ENCODE measurements at regions of chr3 and their contacts with region 1.

Region 1: GRCh38 chr3:45210308-45211041 is 15.6 kb downstream of the TMEM158 start:
- DNase-seq: peak; percentile 86
- ATAC-seq: peak; percentile 97 to 98

Region 2: DNA sequence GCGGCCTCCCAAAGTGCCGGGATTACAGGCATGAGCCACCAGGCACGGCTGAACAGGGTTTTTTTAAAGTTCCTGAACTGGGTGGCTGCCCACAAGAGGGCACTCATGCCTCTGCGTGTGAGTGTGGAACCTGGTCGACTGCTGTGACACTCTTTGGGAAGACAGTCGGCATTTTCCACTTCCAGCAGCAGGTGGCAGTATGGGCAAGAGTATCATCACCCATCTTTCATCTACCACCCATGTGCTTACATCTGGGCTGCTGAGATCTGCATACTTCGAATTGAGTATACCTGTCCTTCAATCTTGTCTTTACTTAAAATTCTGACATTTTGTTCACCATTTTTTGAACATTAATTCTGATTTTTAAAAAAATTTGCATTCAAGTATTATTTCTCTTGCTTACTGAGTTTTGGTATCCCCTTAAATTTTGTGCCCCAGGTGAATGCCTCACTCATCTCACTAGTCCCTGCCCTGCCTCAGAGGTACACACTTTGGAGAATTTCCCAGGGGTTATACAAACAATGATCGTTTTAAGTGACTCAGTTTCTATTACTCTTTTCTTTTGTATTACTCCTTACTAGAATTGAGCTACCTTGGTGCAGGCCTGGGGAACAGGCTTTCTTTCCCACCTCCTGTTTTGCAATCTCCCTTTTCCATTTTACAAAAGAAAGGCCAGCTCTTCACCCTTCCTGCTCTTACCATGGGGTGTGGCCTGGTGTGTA is 172.6 kb before region 1 on chr3:
- intact Hi-C with region 1: loop called (anchors 1 to 5 kb)
- DNase-seq: peak; percentile 92
- ATAC-seq: peak; percentile 73 to 77

Region 3: GRCh38 chr3:45321607-45322391 is 111.3 kb after region 1 on chr3:
- intact Hi-C with region 1: no loop called
- DNase-seq: no peak
- ATAC-seq: no peak